AG04450 (cell line): ENCODE measurements at regions of chr18 and their contacts with region 1.

Region 1: DNA sequence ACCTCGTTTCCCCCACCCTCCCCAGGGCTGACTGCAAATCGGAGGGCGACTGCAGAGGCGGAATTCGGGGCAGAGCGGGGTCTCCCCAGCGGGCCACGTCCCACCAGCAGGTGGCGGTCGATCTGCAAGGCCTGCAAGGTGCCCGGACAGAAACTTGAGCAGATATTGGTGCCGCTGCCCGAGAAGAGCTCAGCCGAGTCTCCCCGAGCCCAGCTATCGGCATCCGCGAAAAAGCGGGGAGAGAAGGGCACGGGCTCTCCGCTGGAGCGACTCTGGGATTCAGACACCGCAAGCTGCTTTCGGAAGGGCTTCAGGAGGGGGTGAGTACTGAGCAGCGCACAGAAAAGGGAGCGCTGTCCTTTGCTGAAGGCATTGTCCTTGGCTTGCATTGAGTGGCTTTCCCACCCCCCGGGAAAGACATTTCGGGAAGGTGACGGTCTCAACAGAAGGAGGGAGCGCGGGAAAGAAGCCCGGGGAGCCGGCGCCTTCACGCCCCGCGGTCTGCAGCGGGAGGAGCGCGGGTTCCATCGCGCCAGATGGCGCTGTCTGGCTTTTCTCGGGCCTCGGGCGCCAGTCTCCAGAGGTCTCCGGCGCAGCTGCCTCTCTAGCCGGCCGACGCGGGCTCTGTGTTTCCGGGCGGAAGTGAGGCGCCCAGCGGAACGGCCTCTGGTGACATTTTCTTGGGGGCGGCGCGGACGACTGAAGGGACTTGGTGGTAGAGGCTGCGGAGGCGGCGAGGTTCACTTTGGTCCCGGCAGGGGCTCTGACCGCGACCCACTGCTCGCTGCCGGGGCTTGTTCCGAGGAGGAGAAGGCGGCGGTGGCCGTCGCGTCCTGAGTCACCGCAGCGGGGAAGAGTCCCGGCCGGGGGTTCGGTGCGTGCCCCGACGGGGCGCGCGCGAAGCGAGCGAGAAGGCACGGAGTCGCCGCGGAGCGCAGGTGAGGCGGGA is 69.5 kb downstream of the HAUS1 start:
- DNase-seq: peak; percentile 81
- H3K4me3 ChIP-seq: peak overlapping the region; percentile 72
- H3K27ac ChIP-seq: peak overlapping the region; percentile 85
- H3K27me3 ChIP-seq: no peaks in the 10 kb centered on the region
- CTCF ChIP-seq: peak; percentile 95

Region 2: DNA sequence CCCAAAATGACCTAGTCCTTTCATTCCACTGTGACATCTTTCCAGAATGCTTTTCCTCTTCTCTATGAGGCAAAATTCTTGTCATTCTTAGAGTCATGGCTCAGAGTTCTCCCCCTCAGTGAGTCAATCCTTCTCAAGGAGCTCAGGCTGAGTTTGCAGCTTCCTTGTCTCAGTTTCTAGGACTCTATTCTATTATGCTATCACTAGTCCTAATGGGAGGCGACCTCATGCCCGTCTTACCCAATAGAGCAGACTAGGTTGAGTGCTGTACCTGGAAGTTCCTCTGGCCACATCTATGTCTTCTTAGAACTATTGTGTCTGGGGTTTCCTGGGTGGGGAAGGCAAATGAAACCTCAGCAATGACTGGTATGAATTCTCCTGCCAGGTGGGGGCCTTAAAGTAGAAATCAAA is 18.0 kb before region 1 on chr18:
- CTCF ChIA-PET with region 1: interaction called, 145 read pairs
- POLR2A ChIA-PET with region 1: interaction called, 5 read pairs
- DNase-seq: peak; percentile 58
- H3K4me3 ChIP-seq: no peak overlapping the region
- H3K27ac ChIP-seq: peak overlapping the region; percentile 12
- H3K27me3 ChIP-seq: no peaks in the 10 kb centered on the region
- CTCF ChIP-seq: no peak

Region 3: GRCh38 chr18:46199515-46200147 is 26.0 kb after region 1 on chr18:
- CTCF ChIA-PET with region 1: interaction called, 36 read pairs
- POLR2A ChIA-PET with region 1: interaction called, 8 read pairs
- DNase-seq: peak; percentile 49
- H3K4me3 ChIP-seq: no peak overlapping the region
- H3K27ac ChIP-seq: no peak overlapping the region
- H3K27me3 ChIP-seq: no peaks in the 10 kb centered on the region
- CTCF ChIP-seq: no peak

Region 4: GRCh38 chr18:46226461-46226860 is 52.8 kb after region 1 on chr18:
- CTCF ChIA-PET with region 1: interaction called, 46 read pairs
- POLR2A ChIA-PET with region 1: no interaction called
- DNase-seq: no peak
- H3K4me3 ChIP-seq: no peak overlapping the region
- H3K27ac ChIP-seq: no peak overlapping the region
- H3K27me3 ChIP-seq: no peaks in the 10 kb centered on the region
- CTCF ChIP-seq: no peak

Region 5: DNA sequence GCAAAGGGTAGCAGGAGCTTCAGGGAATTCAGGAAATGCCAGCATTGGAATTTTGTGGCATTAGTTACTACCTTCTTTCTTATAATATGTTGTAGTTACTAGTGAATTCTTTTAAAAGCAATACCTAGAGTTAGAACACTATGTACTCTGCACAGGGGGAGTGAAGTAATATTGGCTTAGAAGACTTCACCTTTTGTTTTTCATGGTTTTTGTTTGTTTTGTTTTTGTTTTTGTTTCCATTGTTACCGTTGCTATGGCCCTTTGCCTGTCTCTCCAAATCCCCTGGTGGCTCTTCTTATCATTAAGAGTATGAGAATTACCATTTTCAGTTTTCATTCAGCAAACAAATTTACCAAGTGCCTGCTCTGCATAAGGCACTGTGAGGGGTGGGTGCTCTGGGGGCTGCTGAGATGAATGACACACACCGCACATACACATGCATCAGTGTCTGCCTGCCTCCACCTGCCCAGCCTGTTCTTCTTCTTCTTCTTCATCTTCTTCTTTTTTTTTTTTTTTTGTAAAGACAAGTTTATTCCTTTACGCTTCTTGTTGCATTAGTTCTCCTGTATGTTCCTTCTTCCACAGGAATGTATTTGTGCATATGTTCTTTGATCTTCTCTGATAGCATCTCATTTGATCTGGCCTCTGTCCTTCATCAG is 90.7 kb after region 1 on chr18:
- CTCF ChIA-PET with region 1: interaction called, 30 read pairs
- POLR2A ChIA-PET with region 1: no interaction called
- DNase-seq: no peak
- H3K4me3 ChIP-seq: no peak overlapping the region
- H3K27ac ChIP-seq: no peak overlapping the region
- H3K27me3 ChIP-seq: no peaks in the 10 kb centered on the region
- CTCF ChIP-seq: no peak

Region 6: DNA sequence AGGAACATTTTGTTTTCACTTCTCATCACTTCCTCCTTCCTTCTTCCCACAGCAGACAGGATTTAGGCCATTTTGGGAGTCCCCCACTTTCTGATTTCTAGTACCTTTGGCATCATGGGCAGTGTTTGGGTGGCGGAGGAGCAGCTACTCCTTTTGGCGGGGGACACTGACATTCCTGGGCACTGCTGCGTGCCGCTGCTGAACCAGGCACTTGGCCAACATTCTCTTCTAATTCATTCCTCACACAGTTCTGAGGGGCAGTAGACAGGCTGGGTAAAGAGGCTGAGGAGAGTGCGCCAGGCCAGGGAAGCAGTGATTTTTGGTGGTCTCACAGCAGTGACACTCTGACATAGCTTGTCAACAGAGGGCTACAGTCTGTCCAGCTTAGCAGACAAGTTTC is 213.1 kb after region 1 on chr18:
- CTCF ChIA-PET with region 1: interaction called, 10 read pairs
- POLR2A ChIA-PET with region 1: no interaction called
- DNase-seq: no peak
- H3K4me3 ChIP-seq: no peak overlapping the region
- H3K27ac ChIP-seq: no peak overlapping the region
- H3K27me3 ChIP-seq: peaks cover 15% of the 10 kb centered on the region
- CTCF ChIP-seq: no peak

Region 7: DNA sequence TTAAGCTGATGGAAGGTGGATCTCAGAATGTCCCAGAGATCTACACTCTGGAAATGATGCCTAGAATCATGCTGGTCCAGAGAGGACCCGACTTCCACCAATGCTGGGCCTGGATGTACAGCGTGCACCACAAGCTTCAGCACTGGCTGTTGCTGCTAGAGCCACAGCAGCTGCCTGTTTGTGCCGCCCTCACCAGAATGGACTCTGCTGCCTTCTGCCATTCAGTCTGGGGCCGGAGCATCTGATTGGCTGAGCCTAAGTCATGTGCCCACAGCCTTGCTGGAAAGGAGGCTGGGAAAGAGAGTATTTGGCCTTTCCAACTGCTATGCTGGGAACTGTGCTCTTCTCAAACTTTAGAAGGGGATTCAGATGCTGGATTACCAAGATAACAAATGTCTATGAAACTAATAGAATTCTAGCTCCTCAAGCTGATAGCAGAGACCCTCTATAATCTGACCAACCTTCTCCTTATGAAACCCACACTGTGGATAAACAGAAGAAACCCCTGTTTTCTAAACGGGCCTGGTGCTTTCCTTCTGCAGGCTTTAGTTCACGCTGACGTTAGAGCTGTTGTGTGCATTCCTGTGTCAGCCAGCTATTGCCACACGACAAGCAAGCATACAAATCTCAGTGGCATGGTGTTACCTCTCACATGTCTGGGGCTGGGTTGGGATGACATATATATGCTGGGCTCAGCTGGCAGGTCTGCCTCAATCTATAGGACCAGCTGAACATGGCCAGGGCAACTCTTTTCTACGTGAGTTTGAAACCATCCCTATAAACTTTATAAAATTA is 487.5 kb after region 1 on chr18:
- CTCF ChIA-PET with region 1: interaction called, 101 read pairs
- POLR2A ChIA-PET with region 1: interaction called, 3 read pairs
- DNase-seq: no peak
- H3K4me3 ChIP-seq: no peak overlapping the region
- H3K27ac ChIP-seq: no peak overlapping the region
- H3K27me3 ChIP-seq: peaks cover 2% of the 10 kb centered on the region
- CTCF ChIP-seq: no peak